IMR-90 (cell line): ENCODE measurements at regions of chr13 and their contacts with region 1.

Region 1: DNA sequence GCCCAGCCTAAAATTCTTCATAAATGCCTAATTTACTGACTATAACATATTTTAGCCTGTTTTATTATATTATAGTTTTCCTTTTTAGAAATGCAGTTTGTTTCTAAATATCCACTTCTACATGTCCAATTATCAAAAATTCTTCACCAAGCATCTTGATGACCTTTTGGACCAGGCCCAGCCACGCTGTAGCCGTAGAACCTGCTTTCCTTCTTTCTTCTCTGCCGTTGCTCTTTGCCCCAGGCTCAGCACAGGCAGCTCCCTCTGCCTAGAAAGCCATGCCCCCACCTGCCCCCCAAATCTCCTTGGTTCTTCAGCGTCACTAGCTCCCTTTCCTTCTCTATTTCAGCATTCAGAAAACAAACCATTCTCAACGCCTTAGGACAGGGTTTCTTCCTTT is 65.4 kb downstream of the ESD start:
- DNase-seq: no peak
- ATAC-seq: no peak
- H3K4me3 ChIP-seq: no peak overlapping the region
- H3K27ac ChIP-seq: no peak overlapping the region
- H3K4me1 ChIP-seq: no peaks in the 10 kb centered on the region
- H3K27me3 ChIP-seq: no peaks in the 10 kb centered on the region
- CTCF ChIP-seq: no peak
- POLR2A ChIP-seq: no peak
- RAD21 ChIP-seq: no peak

Region 2: DNA sequence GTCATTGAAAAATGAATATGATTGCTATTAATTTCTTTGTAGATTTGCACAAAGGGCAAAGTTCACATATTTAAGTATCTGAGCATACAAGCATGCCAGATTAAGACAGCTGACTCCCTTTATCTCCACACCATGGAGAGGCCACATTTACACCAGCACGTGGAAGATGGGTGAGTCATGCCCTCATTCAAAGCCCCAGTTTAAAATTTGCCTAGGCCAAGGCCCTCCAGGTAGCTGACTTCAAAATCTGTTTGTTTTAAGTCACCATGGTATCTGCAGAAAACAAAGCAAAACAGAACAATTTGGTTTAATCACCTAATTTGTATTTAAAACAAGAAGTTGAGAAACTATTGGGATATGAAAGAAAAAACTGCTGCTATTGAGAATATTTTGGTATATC is 43.7 kb before region 1 on chr13:
- CTCF ChIA-PET with region 1: no interaction called
- POLR2A ChIA-PET with region 1: interaction called, 11 read pairs
- dilution Hi-C with region 1: no loop called
- in situ Hi-C with region 1: no loop called
- intact Hi-C with region 1: no loop called
- DNase-seq: peak; percentile 46
- ATAC-seq: peak; percentile 54
- H3K4me3 ChIP-seq: no peak overlapping the region
- H3K27ac ChIP-seq: no peak overlapping the region
- H3K4me1 ChIP-seq: peaks cover 7% of the 10 kb centered on the region
- H3K27me3 ChIP-seq: no peaks in the 10 kb centered on the region
- CTCF ChIP-seq: no peak
- POLR2A ChIP-seq: no peak
- RAD21 ChIP-seq: no peak

Region 3: DNA sequence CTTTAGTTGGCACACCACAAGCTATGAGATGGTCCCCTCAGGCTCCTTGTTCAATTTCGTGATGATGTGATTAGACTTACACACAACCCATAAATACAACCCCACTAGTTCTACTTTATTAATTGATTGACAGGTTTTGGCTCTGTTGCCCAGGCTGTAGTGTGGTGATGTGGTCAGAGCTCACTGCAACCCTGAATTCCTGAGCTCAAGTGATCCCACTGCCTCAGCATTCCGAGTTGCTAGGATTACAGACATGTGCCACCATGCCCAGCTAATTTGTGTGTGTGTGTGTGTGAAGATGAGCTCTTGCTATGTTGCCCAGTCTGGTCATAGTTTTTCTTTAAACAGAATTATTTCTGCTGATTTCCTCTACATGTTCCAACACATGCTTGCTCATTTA is 182.8 kb after region 1 on chr13:
- CTCF ChIA-PET with region 1: no interaction called
- POLR2A ChIA-PET with region 1: no interaction called
- dilution Hi-C with region 1: no loop called
- in situ Hi-C with region 1: no loop called
- intact Hi-C with region 1: no loop called
- DNase-seq: no peak
- ATAC-seq: no peak
- H3K4me3 ChIP-seq: no peak overlapping the region
- H3K27ac ChIP-seq: no peak overlapping the region
- H3K4me1 ChIP-seq: no peaks in the 10 kb centered on the region
- H3K27me3 ChIP-seq: peaks cover 4% of the 10 kb centered on the region; the same call in 1 of the 2 replicates
- CTCF ChIP-seq: no peak
- POLR2A ChIP-seq: no peak
- RAD21 ChIP-seq: no peak